Activated T-helper 2 cell treated with anti-CD3 and anti-CD28 coated beads, Interferon-gamma antibody, Interleukin-2, Interleukin-4, amounts not matched to agents 10 μg/mL and 5 μg/mL and 100 μg/mL, durations not matched to agents 14 hours and 24 hours and 36 hours (primary cell): ENCODE measurements at regions of chr3 and their contacts with region 1.

Region 1: DNA sequence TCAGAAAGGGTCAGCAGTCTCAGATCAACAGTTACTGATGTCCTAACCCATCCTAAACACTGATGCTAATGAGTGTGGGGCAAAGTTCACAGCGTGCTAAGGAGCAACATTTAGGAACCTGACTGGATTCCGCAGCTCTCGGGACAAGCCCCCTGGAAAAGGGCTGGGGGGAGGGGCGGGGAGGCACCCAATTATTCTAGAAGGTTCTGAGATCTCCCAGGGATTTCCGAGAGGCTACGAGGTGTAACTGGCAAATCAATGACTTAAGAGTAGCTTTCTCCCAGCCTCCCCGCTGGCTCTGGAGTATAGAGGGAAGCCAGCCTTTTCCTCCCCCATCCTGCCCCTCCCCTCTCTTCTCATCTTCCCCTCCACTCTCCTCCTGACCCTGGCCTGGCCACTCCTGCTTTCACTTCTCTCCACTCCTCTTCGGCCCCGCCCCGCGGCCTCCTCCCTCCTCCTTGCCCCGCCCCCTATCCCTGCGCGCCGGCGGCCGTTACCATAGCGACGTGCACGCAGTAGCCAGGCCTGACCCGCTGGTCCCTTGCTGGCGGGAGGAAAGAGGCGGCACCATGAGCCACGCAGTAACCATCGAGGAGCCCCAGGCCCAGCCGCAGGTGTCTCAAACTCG is at the start of gene CFAP91:
- DNase-seq: peak; percentile 74
- H3K4me3 Mint-ChIP-seq: peak within 1 kb of the TSS; percentile 71
- H3K27ac Mint-ChIP-seq: no peak within 1 kb of the TSS
- H3K4me1 Mint-ChIP-seq: peaks cover 29% of the 10 kb centered on the region
- H3K27me3 Mint-ChIP-seq: peaks cover 26% of the 10 kb centered on the region
- total RNA-seq, gene CFAP91: not detected in 2 replicates

Region 2: GRCh38 chr3:119322835-119323722 is 379.6 kb before region 1 on chr3:
- intact Hi-C with region 1: loop called (anchors 1 kb)
- DNase-seq: peak; percentile 87
- H3K4me3 Mint-ChIP-seq: peak overlapping the region; percentile 77
- H3K27ac Mint-ChIP-seq: peak overlapping the region; percentile 83
- H3K4me1 Mint-ChIP-seq: peaks cover 47% of the 10 kb centered on the region
- H3K27me3 Mint-ChIP-seq: peaks cover 2% of the 10 kb centered on the region

Region 3: GRCh38 chr3:119469381-119470189 is 233.1 kb before region 1 on chr3:
- intact Hi-C with region 1: loop called (anchors 2 kb)
- DNase-seq: no peak
- H3K4me3 Mint-ChIP-seq: peak overlapping the region; percentile 92
- H3K27ac Mint-ChIP-seq: peak overlapping the region; percentile 88
- H3K4me1 Mint-ChIP-seq: peaks cover 26% of the 10 kb centered on the region
- H3K27me3 Mint-ChIP-seq: no peaks in the 10 kb centered on the region

Region 4: DNA sequence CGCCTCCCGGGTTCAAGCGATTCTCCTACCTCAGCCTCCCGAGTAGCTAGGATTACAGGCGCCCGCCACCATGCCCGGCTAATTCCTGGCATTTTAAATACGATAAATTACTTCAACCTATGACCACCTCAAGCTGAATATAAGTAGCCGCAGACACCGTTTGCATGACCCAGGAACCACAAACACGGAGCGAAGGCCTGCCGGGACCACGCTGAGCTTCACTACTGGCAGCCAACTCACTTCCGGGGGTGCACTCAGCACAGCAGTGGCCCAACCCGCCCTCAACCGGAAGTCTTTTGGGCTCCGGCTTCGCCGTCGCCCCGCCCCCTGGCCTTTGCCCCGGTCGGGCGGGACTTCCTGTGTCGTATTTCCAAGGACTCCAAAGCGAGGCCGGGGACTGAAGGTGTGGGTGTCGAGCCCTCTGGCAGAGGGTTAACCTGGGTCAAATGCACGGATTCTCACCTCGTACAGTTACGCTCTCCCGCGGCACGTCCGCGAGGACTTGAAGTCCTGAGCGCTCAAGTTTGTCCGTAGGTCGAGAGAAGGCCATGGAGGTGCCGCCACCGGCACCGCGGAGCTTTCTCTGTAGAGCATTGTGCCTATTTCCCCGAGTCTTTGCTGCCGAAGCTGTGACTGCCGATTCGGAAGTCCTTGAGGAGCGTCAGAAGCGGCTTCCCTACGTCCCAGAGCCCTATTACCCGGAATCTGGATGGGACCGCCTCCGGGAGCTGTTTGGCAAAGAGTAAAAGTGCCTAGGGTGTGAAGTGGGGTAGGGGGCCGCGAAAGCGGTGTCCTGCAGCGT is 204.3 kb before region 1 on chr3 and contains the start of gene TIMMDC1:
- intact Hi-C with region 1: loop called (anchors 5 kb)
- DNase-seq: peak; percentile 96
- H3K4me3 Mint-ChIP-seq: peak within 1 kb of the TSS; percentile 96
- H3K27ac Mint-ChIP-seq: peak within 1 kb of the TSS; percentile 95
- H3K4me1 Mint-ChIP-seq: peaks cover 32% of the 10 kb centered on the region
- H3K27me3 Mint-ChIP-seq: no peaks in the 10 kb centered on the region
- total RNA-seq, gene TIMMDC1: 93.6 and 101 TPM in 2 replicates

Region 5: GRCh38 chr3:119937229-119937628 is 234.6 kb after region 1 on chr3:
- intact Hi-C with region 1: loop called (anchors 5 kb)
- DNase-seq: peak; percentile 22
- H3K4me3 Mint-ChIP-seq: peak overlapping the region; percentile 22
- H3K27ac Mint-ChIP-seq: peak overlapping the region; percentile 34
- H3K4me1 Mint-ChIP-seq: peaks cover 29% of the 10 kb centered on the region
- H3K27me3 Mint-ChIP-seq: no peaks in the 10 kb centered on the region